Endothelial cell of umbilical vein (primary cell): ENCODE measurements at regions of chr2 and their contacts with region 1.

Region 1: GRCh38 chr2:198296665-198297308 is 492.4 kb downstream of the PLCL1 start:
- DNase-seq: peak; percentile 63
- H3K4me3 ChIP-seq: no peak overlapping the region
- H3K27ac ChIP-seq: no peak overlapping the region
- H3K4me1 ChIP-seq: no peaks in the 10 kb centered on the region
- H3K27me3 ChIP-seq: peaks cover 0 to 4% of the 10 kb centered on the region in 2 experiments
- CTCF ChIP-seq: peak; percentile 58 to 73
- POLR2A ChIP-seq: no peak

Region 2: GRCh38 chr2:197383823-197384222 is 913.0 kb before region 1 on chr2:
- CTCF ChIA-PET with region 1: interaction called, 4 read pairs
- POLR2A ChIA-PET with region 1: no interaction called
- dilution Hi-C with region 1: no loop called
- intact Hi-C with region 1: loop called (anchors 5 kb)
- DNase-seq: no peak
- H3K4me3 ChIP-seq: no peak overlapping the region
- H3K27ac ChIP-seq: no peak overlapping the region
- H3K4me1 ChIP-seq: no peaks in the 10 kb centered on the region
- H3K27me3 ChIP-seq: peaks cover 0 to 4% of the 10 kb centered on the region in 2 experiments
- CTCF ChIP-seq: no peak
- POLR2A ChIP-seq: no peak

Region 3: GRCh38 chr2:197499594-197500526 is 796.9 kb before region 1 on chr2 and contains the starts of genes HSPD1 and HSPE1:
- CTCF ChIA-PET with region 1: no interaction called
- POLR2A ChIA-PET with region 1: no interaction called
- dilution Hi-C with region 1: no loop called
- intact Hi-C with region 1: loop called (anchors 5 kb)
- DNase-seq: peak; percentile 99
- H3K4me3 ChIP-seq: peak within 1 kb of the TSS; percentile 68 to 93 (median 86)
- H3K27ac ChIP-seq: peak within 1 kb of the TSS; percentile 75
- H3K4me1 ChIP-seq: peaks cover 46% of the 10 kb centered on the region
- H3K27me3 ChIP-seq: no peaks in the 10 kb centered on the region
- CTCF ChIP-seq: no peak
- POLR2A ChIP-seq: peak; percentile 82
- total RNA-seq, gene HSPD1: 307 and 337 TPM in 2 replicates
- total RNA-seq, gene HSPE1: 137 and 145 TPM in 2 replicates

Region 4: GRCh38 chr2:197777823-197778407 is 518.9 kb before region 1 on chr2:
- CTCF ChIA-PET with region 1: interaction called, 12 read pairs
- POLR2A ChIA-PET with region 1: no interaction called
- dilution Hi-C with region 1: no loop called
- intact Hi-C with region 1: no loop called
- DNase-seq: peak; percentile 58
- H3K4me3 ChIP-seq: no peak overlapping the region
- H3K27ac ChIP-seq: no peak overlapping the region
- H3K4me1 ChIP-seq: no peaks in the 10 kb centered on the region
- H3K27me3 ChIP-seq: no peaks in the 10 kb centered on the region
- CTCF ChIP-seq: peak; percentile 28 to 32
- POLR2A ChIP-seq: no peak

Region 5: DNA sequence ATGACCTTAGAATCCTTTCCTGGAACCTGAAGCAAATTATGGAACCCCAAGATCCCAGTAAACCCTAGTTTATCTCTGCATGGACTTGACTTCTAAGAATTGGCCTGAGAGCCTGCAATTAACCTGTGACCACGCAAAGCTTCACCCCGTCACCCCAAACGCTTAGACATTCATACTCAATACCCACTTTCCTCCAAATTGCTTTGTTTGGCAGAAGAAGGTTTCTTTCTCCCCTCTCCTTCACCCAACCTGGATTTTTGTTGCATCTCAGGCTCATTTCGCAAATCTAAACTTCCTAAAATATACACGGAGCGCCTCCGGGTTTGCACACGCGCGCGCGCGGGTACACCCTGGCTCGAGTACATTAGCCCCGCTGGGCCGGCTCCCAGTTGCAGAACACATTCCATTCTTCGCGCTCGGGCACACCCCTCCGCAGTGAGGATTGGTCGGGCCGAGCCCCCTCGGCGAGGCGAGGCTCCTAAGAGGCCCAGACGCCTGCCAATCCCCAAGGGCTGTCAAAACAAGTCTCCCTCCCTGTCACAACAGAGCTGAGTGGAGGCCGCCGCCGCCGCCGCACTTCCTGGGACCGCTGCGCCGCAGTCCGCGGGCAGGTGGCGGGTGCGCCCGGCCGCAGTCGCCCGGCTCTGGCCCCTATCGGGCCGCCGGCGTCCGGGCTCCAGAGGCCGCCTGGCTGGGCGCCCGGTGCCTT is 492.6 kb before region 1 on chr2 and contains the start of gene PLCL1:
- CTCF ChIA-PET with region 1: interaction called, 20 read pairs
- POLR2A ChIA-PET with region 1: interaction called, 4 read pairs
- dilution Hi-C with region 1: no loop called
- intact Hi-C with region 1: loop called (anchors 1 kb)
- DNase-seq: peak; percentile 94
- H3K4me3 ChIP-seq: peak within 1 kb of the TSS; percentile 42 to 78 (median 47)
- H3K27ac ChIP-seq: peak within 1 kb of the TSS; percentile 47
- H3K4me1 ChIP-seq: peaks cover 14% of the 10 kb centered on the region
- H3K27me3 ChIP-seq: no peaks in the 10 kb centered on the region
- CTCF ChIP-seq: no peak
- POLR2A ChIP-seq: no peak
- total RNA-seq, gene PLCL1: 3.4 and 5.1 TPM in 2 replicates

Region 6: GRCh38 chr2:198053776-198054698 is 242.8 kb before region 1 on chr2:
- CTCF ChIA-PET with region 1: no interaction called
- POLR2A ChIA-PET with region 1: no interaction called
- dilution Hi-C with region 1: no loop called
- intact Hi-C with region 1: loop called (anchors 5 kb)
- DNase-seq: peak; percentile 43
- H3K4me3 ChIP-seq: no peak overlapping the region
- H3K27ac ChIP-seq: no peak overlapping the region
- H3K4me1 ChIP-seq: peaks cover 4% of the 10 kb centered on the region
- H3K27me3 ChIP-seq: no peaks in the 10 kb centered on the region
- CTCF ChIP-seq: peak; percentile 44 to 60
- POLR2A ChIP-seq: no peak

Region 7: DNA sequence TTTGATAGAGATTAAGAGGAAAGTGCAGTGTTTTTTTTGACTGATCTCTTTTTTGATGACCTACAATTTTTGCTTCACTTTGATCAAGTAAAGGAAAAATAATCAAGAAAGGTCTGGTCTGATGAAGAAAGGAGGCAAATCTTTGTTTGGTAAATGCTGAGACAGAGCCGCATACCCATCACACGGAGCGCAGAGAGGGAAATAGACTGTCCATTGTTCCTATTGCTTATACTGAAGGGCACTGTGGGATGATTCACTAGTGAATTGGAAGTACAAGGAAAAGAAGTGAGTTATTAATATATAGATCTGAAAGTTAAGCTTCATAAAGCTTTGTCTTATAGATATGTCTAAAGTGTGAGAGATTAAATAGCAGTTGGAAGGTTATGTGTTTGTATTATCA is 37.3 kb before region 1 on chr2:
- CTCF ChIA-PET with region 1: no interaction called
- POLR2A ChIA-PET with region 1: no interaction called
- dilution Hi-C with region 1: no loop called
- intact Hi-C with region 1: no loop called
- DNase-seq: no peak
- H3K4me3 ChIP-seq: no peak overlapping the region
- H3K27ac ChIP-seq: no peak overlapping the region
- H3K4me1 ChIP-seq: no peaks in the 10 kb centered on the region
- H3K27me3 ChIP-seq: no peaks in the 10 kb centered on the region
- CTCF ChIP-seq: no peak
- POLR2A ChIP-seq: no peak

Region 8: DNA sequence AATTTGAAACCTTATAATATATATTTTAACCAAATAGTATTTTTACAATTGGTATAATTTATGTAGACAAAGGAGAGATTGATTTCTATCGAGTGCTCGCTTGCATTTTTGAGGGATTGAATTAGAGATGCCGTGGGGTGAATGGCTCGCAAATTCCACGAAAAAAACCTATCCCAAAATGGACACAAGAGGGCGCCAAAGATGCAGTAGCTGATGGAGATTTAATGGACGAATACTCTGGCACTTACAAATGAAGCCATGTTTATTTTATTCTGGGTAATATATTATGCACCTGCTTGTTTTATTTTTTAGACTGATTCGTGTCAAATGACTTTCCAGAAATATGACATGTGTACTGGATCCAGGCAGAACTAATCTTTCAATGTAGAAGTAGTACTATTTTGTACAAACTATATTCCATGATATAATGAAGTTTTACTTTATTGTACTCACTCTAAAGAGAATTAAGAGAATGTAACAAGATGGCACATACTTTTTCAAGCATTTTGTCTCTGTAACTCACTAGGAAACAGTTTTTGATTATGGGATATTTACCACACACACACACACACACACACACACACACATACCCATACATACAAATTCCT is 13.0 kb after region 1 on chr2:
- CTCF ChIA-PET with region 1: interaction called, 34 read pairs
- POLR2A ChIA-PET with region 1: no interaction called
- dilution Hi-C with region 1: no loop called
- intact Hi-C with region 1: no loop called
- DNase-seq: peak; percentile 61
- H3K4me3 ChIP-seq: no peak overlapping the region
- H3K27ac ChIP-seq: no peak overlapping the region
- H3K4me1 ChIP-seq: no peaks in the 10 kb centered on the region
- H3K27me3 ChIP-seq: peaks cover 14 to 27% of the 10 kb centered on the region in 2 experiments
- CTCF ChIP-seq: peak; percentile 71
- POLR2A ChIP-seq: no peak